Heart right ventricle (tissue), 16 donors: ENCODE measurements at regions of chr1 and their contacts with region 1.

Region 1: DNA sequence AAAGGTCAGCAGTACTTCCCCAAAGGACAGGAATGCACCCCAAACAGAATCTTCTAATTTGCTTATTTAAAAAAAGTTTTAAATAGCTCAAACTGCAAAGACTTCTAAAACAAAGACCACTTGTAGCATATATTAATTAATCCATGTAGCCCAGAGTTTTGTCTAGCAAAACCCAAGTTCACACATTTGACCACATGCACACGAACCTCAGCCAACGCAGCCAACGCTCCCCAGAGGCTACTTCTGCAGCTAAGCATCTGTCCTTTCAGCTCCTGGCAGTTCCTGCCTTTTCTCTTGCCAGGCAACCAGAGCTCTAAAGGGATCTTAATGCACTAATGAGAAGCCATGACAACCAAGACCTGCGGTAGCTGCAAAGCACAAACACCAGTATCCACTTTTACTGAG is 89.6 kb downstream of the RERE start:
- DNase-seq: peak; percentile 36 to 41
- ATAC-seq: peak in 7 of 8 donors; percentile 37 to 74 (median 63)
- H3K4me3 ChIP-seq: no peak overlapping the region
- H3K27ac ChIP-seq: no peak overlapping the region
- H3K4me1 ChIP-seq: peaks cover 0 to 30% (median 8%) of the 10 kb centered on the region in 9 donors
- H3K27me3 ChIP-seq: no peaks in the 10 kb centered on the region
- CTCF ChIP-seq: no peak

Region 2: DNA sequence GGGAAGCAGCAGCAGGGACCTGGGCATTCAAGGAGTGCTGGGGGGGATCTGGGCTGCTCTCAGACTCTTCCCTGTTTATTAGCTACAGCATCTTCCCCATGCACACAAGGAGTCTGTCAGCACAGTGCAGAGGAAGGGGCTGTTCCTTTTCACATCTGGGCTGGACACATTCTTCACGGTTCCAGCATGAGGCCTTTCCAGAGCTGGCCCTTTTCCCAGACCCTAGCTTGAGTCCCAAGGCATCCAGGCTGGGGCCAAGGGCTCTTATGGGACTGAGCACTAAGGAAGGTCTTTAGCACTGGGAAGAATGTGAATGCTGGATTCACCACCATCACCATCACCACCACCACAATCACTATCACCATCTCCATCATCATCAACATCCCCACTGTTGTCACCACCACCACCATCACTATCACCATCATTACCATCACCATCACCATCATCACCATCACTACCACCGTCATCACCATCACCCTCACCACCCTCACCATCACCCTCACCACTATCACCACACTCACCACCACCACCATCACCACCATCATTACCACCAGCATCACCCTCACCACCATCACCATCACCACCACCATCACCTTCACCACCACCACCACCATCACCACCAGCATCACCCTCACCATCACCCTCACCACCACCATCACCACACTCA is 737.9 kb before region 1 on chr1:
- intact Hi-C with region 1: loop called in 1 of 10 experiments (anchors 10 kb)
- DNase-seq: no peak
- ATAC-seq: peak in 3 of 8 donors; percentile 22 to 64 (median 46)
- H3K4me3 ChIP-seq: no peak overlapping the region
- H3K27ac ChIP-seq: no peak overlapping the region
- H3K4me1 ChIP-seq: peaks cover 0 to 8% (median 0%) of the 10 kb centered on the region in 9 donors
- H3K27me3 ChIP-seq: no peaks in the 10 kb centered on the region
- CTCF ChIP-seq: no peak

Region 3: GRCh38 chr1:8671306-8671917 is 56.4 kb before region 1 on chr1:
- intact Hi-C with region 1: loop called in 6 of 10 experiments (anchors 2 to 10 kb)
- DNase-seq: peak in 1 of 2 donors; percentile 69
- ATAC-seq: peak in 6 of 8 donors; percentile 62 to 80 (median 75)
- H3K4me3 ChIP-seq: peak overlapping the region in 1 of 10 donors; percentile 10
- H3K27ac ChIP-seq: peak overlapping the region in 3 of 10 donors; percentile 19 to 42 (median 30)
- H3K4me1 ChIP-seq: peaks cover 6 to 73% (median 52%) of the 10 kb centered on the region in 9 donors
- H3K27me3 ChIP-seq: no peaks in the 10 kb centered on the region
- CTCF ChIP-seq: peak; percentile 53 to 93 (median 85)